Activated CD4-positive, alpha-beta T cell treated with anti-CD3 and anti-CD28 coated beads for 36 hours (primary cell): ENCODE measurements at regions of chr7 and their contacts with region 1.

Region 1: GRCh38 chr7:78863281-78863680 is 590.2 kb downstream of the MAGI2 start:
- DNase-seq: no peak
- ATAC-seq: no peak
- H3K4me3 Mint-ChIP-seq: no peak overlapping the region
- H3K27ac Mint-ChIP-seq: no peak overlapping the region
- H3K4me1 Mint-ChIP-seq: no peaks in the 10 kb centered on the region
- H3K27me3 Mint-ChIP-seq: no peaks in the 10 kb centered on the region

Region 2: DNA sequence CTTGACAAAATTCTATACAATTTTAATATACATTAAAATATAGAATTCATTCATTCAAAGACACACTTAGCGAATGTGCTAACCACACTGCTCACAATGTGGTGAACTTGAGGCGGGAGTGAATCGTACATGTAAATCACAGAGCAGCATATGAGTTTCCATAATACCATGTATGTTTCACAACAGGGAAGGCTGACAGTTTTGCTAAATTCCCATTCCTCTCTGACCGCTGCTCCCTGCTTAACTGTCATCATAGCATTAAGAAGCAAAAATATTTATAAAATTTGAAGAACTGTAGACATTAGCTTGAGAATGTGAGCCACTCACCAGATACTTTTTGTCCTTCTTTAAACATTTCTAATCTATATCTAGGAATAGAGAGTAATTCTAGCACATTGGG is 173.1 kb before region 1 on chr7:
- CTCF ChIA-PET with region 1: no interaction called
- POLR2A ChIA-PET with region 1: no interaction called
- intact Hi-C with region 1: no loop called
- DNase-seq: no peak
- ATAC-seq: no peak
- H3K4me3 Mint-ChIP-seq: no peak overlapping the region
- H3K27ac Mint-ChIP-seq: no peak overlapping the region
- H3K4me1 Mint-ChIP-seq: no peaks in the 10 kb centered on the region
- H3K27me3 Mint-ChIP-seq: peaks cover 1% of the 10 kb centered on the region

Region 3: DNA sequence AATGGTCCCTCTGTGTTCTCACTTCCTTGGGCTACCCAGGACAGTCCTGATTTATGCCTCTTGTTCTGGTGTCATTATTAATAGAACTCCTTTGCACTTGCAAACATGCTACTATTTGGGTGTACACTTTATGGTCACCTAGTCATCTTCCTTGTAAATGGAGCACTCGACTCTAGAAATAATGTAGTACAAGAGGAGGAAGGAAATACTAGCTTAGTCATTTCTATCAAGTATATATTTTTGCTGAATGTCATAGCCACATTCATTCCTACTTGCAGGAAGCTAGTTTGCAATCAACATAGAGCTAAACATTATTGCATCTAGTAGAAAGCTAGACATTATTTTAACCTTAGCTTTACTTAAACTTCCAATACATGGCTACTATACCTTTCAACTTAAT is 254.9 kb after region 1 on chr7:
- CTCF ChIA-PET with region 1: no interaction called
- POLR2A ChIA-PET with region 1: no interaction called
- intact Hi-C with region 1: loop called in 1 of 2 experiments (anchors 5 kb)
- DNase-seq: no peak
- ATAC-seq: no peak
- H3K4me3 Mint-ChIP-seq: no peak overlapping the region
- H3K27ac Mint-ChIP-seq: no peak overlapping the region
- H3K4me1 Mint-ChIP-seq: no peaks in the 10 kb centered on the region
- H3K27me3 Mint-ChIP-seq: no peaks in the 10 kb centered on the region